ENCODE measurements at regions of chr16 and their contacts with region 1.

Region 1: DNA sequence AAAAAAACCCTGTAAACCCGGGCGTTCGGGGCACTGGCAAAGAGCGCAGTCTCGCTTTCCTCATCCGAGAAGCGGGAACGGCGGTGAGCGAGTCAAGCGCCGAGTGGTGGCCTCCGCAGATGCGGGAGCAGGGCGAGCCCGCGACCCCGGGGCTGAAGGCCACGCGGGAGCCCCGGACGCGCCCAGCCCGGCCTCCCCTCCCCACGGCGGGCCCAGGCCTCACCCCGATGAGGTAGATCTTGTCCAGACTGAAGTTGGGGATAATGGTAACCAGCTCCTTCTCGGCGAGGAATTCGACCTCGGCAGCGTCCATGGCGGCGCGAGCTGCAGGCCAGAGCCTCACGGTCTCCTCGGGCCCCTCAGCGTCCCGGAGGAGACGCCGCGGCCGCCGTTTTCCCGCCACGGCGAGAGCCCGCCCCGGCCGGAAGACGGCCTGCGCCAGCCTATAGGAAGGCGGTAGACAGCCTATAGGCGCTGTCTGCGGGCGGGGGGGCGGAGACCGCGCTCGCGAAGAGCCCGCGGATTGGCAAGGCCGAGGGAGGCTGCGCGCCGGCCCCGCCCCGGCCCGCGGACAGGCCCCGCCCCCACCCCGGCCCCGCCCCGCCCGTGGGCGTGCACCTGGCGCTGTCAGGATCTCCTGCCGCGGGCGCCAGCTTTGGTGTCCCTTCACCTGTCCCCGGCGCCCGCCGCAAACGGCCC is at the start of gene GINS2:
- DNase-seq: peak; percentile 97
- H3K4me3 Mint-ChIP-seq: peak within 1 kb of the TSS; percentile 84
- H3K27ac Mint-ChIP-seq: peak within 1 kb of the TSS; percentile 78
- H3K4me1 Mint-ChIP-seq: peaks cover 17% of the 10 kb centered on the region
- H3K27me3 Mint-ChIP-seq: peaks cover 5% of the 10 kb centered on the region
- total RNA-seq, gene GINS2: 87.4 and 93.0 TPM in 2 replicates

Region 2: GRCh38 chr16:85583491-85584181 is 105.1 kb before region 1 on chr16:
- intact Hi-C with region 1: no loop called
- DNase-seq: no peak
- H3K4me3 Mint-ChIP-seq: no peak overlapping the region
- H3K27ac Mint-ChIP-seq: no peak overlapping the region
- H3K4me1 Mint-ChIP-seq: peaks cover 3% of the 10 kb centered on the region
- H3K27me3 Mint-ChIP-seq: no peaks in the 10 kb centered on the region

Region 3: DNA sequence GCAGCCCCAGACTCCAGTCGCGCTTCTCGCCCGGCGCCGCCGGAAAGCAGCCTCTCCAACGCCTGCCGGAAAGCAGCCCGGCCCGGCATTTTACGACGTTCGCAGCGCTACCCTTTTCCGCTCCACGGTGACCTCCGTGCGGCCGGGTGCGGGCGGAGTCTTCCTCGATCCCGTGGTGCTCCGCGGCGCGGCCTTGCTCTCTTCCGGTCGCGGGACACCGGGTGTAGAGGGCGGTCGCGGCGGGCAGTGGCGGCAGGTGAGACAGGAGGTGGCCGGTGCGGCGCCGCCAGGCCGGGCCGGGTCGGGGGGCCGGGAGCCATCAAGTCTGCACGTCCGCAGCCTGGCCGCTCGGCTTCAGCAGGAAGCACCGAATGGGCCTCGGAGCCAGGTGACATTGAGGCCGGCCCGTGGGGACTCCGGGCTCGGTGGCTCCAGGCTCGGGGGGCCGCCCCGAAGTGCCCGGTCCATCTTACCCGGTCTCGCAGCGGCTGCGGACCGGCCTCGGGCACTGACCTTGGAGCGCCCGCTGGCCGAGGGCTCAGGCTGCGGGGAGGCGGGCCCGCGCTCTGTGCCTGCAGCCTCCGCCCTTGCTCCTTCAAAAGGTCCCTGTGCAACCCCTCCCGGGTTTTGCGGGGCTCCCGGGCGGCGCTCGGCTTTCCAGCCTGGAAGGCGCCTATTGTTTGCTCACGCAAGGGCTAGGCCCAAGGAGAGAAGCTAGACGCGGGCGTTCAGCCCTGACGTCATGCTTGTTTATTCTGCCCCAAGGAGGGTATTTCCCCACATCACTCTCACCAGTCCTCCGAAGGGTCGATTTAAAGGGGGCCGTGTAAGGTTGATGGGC is 111.0 kb after region 1 on chr16 and contains the starts of genes COX4I1 and EMC8:
- intact Hi-C with region 1: loop called (anchors 2 kb)
- DNase-seq: peak; percentile 98
- H3K4me3 Mint-ChIP-seq: peak within 1 kb of the TSS; percentile 92
- H3K27ac Mint-ChIP-seq: peak within 1 kb of the TSS; percentile 97
- H3K4me1 Mint-ChIP-seq: peaks cover 46% of the 10 kb centered on the region
- H3K27me3 Mint-ChIP-seq: no peaks in the 10 kb centered on the region
- total RNA-seq, gene COX4I1: 555 and 569 TPM in 2 replicates
- total RNA-seq, gene EMC8: 49.1 and 57.1 TPM in 2 replicates

Region 4: GRCh38 chr16:85878874-85879273 is 190.1 kb after region 1 on chr16:
- intact Hi-C with region 1: no loop called
- DNase-seq: no peak
- H3K4me3 Mint-ChIP-seq: no peak overlapping the region
- H3K27ac Mint-ChIP-seq: no peak overlapping the region
- H3K4me1 Mint-ChIP-seq: peaks cover 30% of the 10 kb centered on the region
- H3K27me3 Mint-ChIP-seq: peaks cover 52% of the 10 kb centered on the region